ENCODE measurements at regions of chr9 and their contacts with region 1.

Region 1: DNA sequence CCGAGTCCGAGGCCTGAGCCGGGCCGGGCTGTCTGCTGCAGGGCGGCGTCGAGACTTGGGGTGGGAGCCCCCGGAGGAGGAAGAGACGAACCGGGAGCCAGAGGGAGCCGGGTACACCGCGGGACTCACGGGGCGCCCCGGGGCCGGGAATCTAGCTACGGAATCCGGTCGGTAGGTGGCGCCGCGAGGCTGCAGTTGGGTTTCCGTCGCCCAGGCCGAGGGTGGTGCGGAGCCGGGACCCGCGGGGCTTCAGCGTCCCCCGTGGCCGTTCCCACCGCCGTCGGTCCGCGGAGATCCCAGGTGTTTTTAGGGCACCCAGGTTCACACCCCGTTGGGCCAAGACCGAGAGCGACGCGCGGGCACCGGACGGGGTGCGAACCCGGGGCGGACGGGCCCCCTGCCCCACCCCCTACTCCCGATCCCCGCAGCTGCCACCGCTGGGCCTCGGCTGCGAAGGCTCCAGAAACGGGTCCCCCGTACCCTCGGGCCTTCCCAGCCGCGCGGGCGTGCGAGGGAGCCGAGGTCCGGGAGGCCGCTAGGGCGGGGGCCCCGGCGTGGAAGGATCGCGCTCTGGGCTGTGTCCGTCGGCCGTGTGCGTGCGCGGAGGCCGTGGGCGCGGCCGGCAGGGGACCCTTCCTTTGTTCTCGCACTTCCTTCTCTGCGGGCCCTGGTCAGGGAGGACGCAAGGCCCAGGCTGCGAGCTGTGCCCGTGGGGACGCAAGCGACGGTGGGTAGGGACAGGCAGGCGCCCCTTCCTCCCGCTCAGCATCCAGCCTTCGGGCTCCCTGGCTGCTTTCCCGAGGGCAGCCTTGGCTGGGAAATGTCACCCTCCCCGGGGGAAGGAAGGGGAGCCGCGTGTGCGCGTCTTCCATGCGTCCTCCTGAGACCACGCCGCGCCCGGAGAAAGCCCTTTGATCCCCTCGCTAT is 146.6 kb downstream of the GAPVD1 start:
- DNase-seq: peak; percentile 76
- H3K4me3 Mint-ChIP-seq: peak overlapping the region; percentile 41
- H3K27ac Mint-ChIP-seq: no peak overlapping the region
- H3K4me1 Mint-ChIP-seq: peaks cover 14% of the 10 kb centered on the region
- H3K27me3 Mint-ChIP-seq: peaks cover 15% of the 10 kb centered on the region

Region 2: DNA sequence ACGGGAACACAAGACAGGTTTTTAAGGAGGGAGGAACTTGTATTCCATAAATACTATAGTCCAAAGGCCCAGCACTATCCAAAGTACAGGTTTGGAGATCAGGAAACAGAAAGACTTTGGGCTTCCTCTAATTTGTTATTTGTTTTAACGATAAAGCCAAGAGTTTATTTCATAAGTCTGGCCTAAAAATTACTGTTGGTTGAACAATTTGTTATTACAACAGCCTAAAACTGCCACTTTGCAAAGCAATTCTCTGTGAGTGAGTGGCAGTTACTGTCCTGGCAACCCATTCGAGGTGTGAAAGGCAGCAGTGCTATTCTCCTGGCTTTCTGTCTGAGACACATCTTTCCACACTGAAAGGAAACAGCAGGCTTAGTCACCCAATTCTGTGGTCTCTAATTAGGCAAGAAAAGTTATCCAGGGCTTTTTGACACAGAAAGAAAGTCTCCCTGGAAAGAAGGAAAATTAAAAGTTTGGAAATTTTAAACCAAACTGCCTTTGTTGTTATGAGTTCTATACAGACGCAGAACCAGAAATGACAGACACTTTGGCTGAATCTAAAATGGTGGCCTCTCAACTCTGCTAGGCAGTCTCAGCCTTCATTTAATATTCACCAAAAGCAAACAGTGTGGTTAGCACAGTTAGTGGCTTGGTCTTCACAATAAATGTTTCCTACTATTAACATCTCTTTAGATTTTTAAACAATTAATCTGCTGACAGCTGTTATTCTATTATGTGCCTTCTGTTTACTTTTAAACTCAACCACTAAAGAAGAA is 1026.9 kb before region 1 on chr9:
- CTCF ChIA-PET with region 1: no interaction called
- POLR2A ChIA-PET with region 1: no interaction called
- DNase-seq: no peak
- H3K4me3 Mint-ChIP-seq: no peak overlapping the region
- H3K27ac Mint-ChIP-seq: no peak overlapping the region
- H3K4me1 Mint-ChIP-seq: peaks cover 15% of the 10 kb centered on the region
- H3K27me3 Mint-ChIP-seq: no peaks in the 10 kb centered on the region

Region 3: DNA sequence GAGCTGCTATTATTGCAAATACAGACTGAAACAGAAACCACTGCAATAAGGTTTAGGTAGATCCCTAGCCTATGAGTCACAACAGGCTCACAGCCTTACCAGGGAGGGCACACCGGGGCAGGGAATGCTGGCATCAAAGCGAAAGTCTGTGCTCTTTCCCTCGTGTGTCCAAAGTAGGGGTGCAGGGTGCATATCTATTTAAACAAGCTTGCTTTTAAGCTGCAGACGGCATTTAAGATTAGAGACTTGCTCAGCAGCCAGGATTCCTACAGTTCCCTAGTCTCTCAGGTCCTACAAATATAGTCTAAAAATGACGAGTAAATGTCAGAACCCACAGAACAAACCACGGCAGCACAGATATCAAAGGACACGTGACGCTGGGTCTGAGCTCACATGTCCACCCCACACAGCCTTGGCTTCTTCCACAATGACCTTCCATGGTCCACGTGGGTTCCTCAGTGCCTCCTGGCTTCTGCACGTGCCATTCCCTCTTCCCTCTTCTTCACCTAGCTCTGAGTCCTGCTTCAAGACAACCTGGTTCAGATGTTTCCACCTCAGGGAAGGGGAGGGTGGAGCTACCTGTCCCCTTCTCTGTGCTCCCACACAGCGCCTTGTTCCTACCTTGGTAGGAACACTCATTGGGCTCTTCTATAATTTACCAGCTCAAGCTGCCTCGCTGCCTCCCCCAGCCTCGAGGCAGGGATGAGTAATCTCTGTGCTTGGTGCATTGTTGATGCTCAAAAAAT is 105.6 kb after region 1 on chr9:
- CTCF ChIA-PET with region 1: interaction called, 11 read pairs
- POLR2A ChIA-PET with region 1: no interaction called
- DNase-seq: peak; percentile 40
- H3K4me3 Mint-ChIP-seq: peak overlapping the region; percentile 26
- H3K27ac Mint-ChIP-seq: peak overlapping the region; percentile 40
- H3K4me1 Mint-ChIP-seq: peaks cover 15% of the 10 kb centered on the region
- H3K27me3 Mint-ChIP-seq: no peaks in the 10 kb centered on the region

Region 4: GRCh38 chr9:125690679-125691078 is 282.4 kb after region 1 on chr9:
- CTCF ChIA-PET with region 1: interaction called, 11 read pairs
- POLR2A ChIA-PET with region 1: no interaction called
- DNase-seq: no peak
- H3K4me3 Mint-ChIP-seq: no peak overlapping the region
- H3K27ac Mint-ChIP-seq: no peak overlapping the region
- H3K4me1 Mint-ChIP-seq: no peaks in the 10 kb centered on the region
- H3K27me3 Mint-ChIP-seq: no peaks in the 10 kb centered on the region